ENCODE measurements at regions of chr7 and their contacts with region 1.

Region 1: DNA sequence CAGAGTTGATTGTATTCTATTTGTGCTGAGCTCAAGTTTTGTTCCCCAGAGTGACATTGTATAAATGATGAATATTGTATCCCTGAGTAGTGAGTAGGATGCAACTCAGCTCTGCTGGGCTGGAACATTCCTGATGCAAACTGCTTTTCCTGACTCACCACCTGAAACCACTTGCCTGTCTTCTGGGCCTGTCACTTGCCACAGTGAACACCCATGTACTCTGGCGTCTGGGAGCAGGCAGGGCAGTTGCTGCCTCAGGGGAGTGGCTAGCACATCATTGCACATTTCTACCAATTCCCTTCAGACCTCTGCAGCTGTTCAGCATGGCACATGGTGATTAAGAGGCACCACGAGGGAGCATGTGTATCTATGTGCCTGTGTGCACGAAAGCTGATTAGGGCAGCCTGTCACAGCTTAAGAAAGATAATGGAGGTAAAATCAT is 157.3 kb downstream of the SND1 start:
- DNase-seq: no peak
- ATAC-seq: no peak
- H3K4me3 ChIP-seq: no peak overlapping the region
- H3K27ac ChIP-seq: no peak overlapping the region
- H3K4me1 ChIP-seq: no peaks in the 10 kb centered on the region
- H3K27me3 ChIP-seq: no peaks in the 10 kb centered on the region
- CTCF ChIP-seq: no peak

Region 2: DNA sequence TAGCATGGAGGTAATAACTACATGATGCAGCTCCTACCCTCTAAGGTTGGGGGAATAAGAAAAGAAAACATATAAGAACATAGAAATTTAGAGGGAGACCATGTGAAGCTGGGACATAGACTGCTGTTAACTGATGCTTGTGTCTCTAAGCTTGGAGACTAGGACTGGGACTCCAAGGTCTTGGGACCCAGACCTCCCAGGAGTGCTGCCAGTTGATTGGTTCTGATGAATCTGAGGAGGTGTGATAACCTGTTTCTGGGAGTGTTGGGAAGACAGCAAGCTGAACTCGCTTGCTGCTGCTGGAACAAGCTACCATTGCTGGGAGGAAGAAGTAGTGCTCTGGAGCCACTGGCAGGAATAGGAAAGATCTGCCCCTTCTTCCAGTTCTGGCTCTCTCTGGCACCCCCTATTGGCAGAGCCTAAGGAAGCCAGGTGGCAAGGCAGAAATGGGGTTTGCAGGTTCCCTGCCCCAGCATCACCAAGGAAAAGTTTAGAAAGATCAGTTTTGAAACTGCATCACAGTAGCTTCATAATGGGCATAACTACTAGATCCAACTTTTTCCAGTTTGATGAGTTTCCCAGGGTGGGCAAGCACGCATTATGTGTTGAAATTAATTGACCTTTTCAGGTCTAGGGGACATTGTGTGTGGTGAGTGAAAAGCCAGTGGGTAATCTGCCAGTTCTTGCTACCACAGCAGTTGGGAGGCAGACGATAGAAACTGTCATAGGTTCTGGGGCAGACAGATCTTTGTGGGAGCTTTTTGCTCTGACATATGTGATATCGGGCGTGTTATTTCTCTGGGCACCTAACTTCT is 16.5 kb before region 1 on chr7:
- CTCF ChIA-PET with region 1: interaction called, 11 read pairs
- POLR2A ChIA-PET with region 1: no interaction called
- in situ Hi-C with region 1: no loop called
- intact Hi-C with region 1: no loop called
- DNase-seq: peak; percentile 33
- ATAC-seq: peak; percentile 65; the same call in 1 of the 2 replicates
- H3K4me3 ChIP-seq: no peak overlapping the region
- H3K27ac ChIP-seq: no peak overlapping the region
- H3K4me1 ChIP-seq: no peaks in the 10 kb centered on the region
- H3K27me3 ChIP-seq: no peaks in the 10 kb centered on the region
- CTCF ChIP-seq: peak; percentile 82

Measured in Panc1 (cell line).